AG04449 (cell line): ENCODE measurements at regions of chr10 and their contacts with region 1.

Region 1: DNA sequence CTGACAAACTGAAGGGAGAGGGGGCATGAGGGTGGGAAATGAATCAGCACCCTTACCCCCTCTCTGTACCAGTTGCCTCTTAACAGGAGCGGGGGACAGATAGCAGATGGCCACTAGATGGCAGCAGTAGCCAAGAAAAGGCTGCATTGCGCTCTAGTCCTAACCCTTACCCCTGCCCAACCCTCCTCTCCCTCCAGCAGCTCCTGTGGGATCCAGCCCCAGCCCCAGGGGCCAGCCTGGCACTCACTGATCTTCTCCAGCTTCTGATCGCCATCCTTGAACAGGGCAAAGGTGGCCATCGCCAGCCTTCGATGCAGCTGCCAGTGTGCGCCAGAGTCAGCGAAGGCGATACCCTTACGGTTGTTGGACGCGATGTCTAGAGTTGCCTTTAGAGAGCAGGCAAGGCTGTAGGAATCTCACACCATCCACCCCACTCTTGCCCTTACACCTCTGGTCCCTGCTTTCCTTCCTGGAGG is 2.2 kb downstream of the CYP17A1 start:
- DNase-seq: no peak
- H3K4me3 ChIP-seq: no peak overlapping the region
- CTCF ChIP-seq: peak; percentile 85

Region 2: DNA sequence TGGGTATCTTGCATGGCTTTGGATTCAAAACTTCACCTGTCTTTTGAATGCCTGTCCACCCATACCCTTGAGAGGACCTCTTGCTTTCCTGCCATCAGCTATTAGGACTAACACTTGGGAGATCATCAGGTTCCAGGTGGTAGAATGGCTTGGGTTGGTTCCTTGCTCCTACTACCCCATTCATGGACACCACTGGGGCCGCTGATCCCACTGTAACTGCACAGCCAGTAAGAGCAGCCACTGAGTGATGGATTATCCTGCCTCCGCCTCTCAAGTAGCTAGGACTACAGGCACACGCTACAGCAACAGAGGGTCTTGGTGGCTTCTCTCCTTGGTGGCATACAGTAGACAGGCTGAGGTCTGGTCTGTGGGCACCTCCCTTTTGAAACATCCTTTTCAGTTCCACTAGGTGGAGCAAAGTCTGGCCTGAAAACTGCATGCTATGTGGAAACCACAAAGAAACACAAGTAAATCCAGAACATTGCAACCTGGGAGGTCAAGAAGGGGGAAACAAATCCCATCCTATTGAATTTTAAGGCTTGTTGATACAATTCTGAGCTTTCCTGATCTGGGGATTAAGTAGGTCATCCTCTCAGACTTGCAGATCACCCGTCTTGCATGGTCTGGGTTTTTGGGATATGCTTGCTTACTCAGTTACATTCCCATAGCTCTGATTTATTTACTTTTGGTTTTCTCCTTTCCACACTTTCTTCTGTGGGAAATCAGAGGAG is 81.9 kb before region 1 on chr10:
- CTCF ChIA-PET with region 1: interaction called, 11 read pairs
- POLR2A ChIA-PET with region 1: no interaction called
- DNase-seq: peak; percentile 67
- H3K4me3 ChIP-seq: no peak overlapping the region; the same call in 1 of the 2 replicates
- CTCF ChIP-seq: peak; percentile 58

Region 3: DNA sequence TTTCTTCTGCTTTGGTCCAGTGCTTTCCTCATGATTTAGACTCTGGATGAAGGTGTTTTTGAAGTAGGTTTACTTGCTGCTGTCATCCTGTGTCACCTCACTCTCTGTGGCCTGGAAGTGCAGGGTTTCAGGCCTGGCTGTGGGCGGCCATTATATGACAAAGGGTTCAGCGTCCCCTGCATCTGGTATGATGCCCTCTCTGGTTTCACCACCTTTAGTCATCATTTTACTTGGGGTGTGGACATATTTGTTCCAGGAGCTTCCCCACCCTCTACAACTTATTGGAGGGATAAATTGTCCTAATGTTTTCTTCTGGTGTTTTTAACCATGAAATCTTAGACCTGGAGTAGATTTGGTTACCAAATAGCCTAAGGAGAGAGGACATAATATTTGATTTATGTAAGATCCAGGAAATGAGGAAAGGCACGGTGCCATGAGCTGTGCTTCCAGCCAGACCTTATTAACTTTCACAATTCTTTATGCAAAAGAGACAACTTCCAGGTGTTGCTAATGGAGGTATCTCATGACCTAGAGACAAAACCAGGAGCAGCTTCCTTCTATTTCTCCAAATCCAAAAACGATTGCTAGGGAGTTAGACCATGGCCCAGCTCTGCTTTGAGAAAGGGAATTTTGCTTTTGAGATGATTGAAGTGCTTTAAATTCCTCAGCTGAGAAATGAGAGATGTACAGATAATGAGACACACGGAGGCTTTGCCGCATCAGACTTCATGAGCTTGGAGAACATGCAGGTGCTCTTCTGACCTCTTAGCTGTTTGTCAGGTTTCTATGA is 70.5 kb before region 1 on chr10:
- CTCF ChIA-PET with region 1: no interaction called
- POLR2A ChIA-PET with region 1: no interaction called
- DNase-seq: no peak
- H3K4me3 ChIP-seq: no peak overlapping the region
- CTCF ChIP-seq: no peak

Region 4: GRCh38 chr10:102822222-102822621 is 12.8 kb before region 1 on chr10:
- CTCF ChIA-PET with region 1: interaction called, 18 read pairs
- POLR2A ChIA-PET with region 1: no interaction called
- DNase-seq: no peak
- H3K4me3 ChIP-seq: no peak overlapping the region
- CTCF ChIP-seq: no peak

Region 5: DNA sequence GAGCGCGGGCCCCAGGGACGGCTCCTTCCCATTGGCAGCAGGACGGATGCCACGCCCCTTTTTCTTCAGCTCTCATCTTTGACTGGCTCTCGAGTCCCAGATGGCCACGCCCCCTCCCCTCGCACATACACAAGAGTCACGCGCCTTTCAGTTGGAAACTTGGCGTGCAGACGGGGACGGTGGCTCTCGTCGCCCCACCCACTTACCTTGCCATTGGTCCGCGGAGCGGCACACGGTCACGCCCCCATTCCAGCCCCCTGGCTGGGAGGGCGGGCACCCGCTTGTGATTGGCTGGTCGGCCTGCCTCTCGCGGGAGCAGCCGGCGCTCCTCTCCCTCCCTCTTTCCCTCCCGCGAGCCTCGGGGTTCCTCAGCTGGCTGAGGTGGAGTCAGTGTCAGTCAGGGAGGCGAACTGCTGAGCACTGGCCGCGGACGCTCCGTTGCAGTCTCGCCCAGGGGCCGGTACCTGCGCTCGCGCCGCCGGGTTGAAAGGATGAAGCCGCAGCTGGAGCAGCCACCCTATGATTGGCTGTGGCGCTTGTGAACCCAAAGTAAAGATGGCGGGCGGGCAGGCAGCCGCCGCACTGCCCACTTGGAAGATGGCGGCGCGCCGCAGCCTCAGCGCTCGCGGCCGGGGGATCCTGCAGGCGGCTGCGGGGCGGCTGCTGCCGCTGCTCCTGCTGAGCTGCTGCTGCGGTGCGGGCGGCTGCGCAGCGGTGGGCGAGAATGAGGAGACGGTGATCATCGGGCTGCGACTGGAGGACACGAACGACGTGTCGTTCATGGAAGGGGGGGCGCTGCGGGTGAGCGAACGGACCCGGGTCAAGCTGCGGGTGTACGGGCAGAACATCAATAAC is 83.1 kb after region 1 on chr10 and contains the start of gene CNNM2:
- CTCF ChIA-PET with region 1: interaction called, 29 read pairs
- POLR2A ChIA-PET with region 1: no interaction called
- DNase-seq: peak; percentile 97
- H3K4me3 ChIP-seq: peak within 1 kb of the TSS; percentile 99
- CTCF ChIP-seq: no peak